T-cell (primary cell): ENCODE measurements at regions of chr17 and their contacts with region 1.

Region 1: DNA sequence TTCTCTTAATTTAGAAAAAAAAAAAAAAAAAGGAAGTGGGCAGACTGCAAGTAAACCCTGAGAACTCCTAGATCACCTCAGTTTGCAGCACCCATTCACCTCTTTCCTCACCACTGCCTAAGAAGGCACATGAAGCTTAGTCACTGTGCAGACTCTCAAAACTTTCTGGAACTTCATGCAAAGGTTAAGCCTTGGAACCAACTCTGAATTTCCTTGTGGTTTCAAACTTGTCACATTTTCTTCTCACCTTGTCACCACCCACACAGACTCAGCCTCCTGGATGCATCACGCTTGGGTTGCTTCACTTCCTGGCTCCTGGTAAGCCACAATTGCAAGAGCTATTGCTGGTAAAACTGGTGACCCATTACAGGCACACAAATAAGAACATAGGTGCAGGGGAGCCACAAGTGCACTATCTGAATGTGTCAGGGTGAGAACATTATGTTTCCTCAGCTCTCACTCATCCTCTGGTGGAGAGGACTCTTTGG is 15.0 kb upstream of the CPD start:
- DNase-seq: peak; percentile 32 to 87 (median 66)
- ATAC-seq: peak; percentile 90 to 91 (median 90)
- H3K4me3 ChIP-seq: no peak overlapping the region
- H3K4me3 Mint-ChIP-seq: peak overlapping the region; percentile 20 to 57 (median 44)
- H3K27ac ChIP-seq: peak overlapping the region; percentile 39
- H3K27ac Mint-ChIP-seq: peak overlapping the region; percentile 90 to 92
- H3K4me1 ChIP-seq: peaks cover 15 to 34% of the 10 kb centered on the region in 2 experiments
- H3K4me1 Mint-ChIP-seq: peaks cover 19 to 30% (median 29%) of the 10 kb centered on the region in 3 donors
- H3K27me3 ChIP-seq: no peaks in the 10 kb centered on the region
- H3K27me3 Mint-ChIP-seq: no peaks in the 10 kb centered on the region

Region 2: DNA sequence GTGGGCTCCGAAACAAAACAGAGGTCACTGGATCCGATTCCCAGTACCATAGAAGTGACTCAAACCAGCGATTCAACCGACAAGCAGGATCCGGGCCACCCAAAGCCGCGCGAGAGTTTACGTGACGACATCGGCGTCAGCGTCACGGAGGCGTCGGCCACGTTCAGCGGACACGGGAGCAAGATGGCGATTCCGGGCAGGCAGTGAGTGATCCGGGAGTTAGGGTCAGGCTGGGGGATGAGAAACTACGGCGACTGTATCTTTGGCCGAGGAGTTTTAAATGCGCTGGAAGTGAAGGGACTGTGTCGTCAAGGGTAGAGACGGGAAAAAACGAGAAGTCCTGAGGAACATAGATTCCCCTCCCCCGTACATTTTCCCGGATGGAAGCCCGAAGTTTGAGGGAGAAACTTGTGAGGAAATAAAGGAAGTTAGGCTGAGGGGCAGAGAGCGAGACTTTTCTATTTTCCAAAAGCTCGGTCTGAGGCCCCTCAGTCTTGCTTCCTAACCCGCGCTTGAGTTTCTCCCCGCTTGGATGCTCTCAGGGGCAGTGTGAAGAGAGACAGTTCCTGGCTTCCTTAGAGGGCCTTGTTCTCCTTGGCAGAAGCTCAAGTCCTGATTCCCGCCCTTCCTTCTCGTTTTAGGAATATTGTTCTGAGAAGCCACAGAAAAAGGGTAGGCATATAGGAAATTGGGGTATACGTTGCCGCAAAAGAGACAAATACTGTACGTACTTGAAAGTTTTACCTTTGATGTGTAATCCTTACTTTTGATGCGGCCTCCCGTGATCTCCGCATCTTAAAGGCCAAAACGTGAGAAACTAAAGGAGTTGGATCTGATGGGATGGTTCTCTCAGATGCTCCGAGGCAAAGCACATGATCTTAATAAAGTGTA is 246.9 kb before region 1 on chr17 and contains the start of gene NSRP1:
- CTCF ChIA-PET with region 1: no interaction called
- POLR2A ChIA-PET with region 1: interaction called in 1 of 2 experiments, 19 read pairs
- DNase-seq: peak; percentile 85 to 96 (median 90)
- ATAC-seq: peak; percentile 98 to 100 (median 99)
- H3K4me3 ChIP-seq: peak within 1 kb of the TSS; percentile 97 to 99
- H3K4me3 Mint-ChIP-seq: peak within 1 kb of the TSS; percentile 94 to 98 (median 95)
- H3K27ac ChIP-seq: peak within 1 kb of the TSS; percentile 99
- H3K27ac Mint-ChIP-seq: peak within 1 kb of the TSS; percentile 96 to 98
- H3K4me1 ChIP-seq: peaks cover 13 to 21% of the 10 kb centered on the region in 2 experiments
- H3K4me1 Mint-ChIP-seq: peaks cover 34 to 48% (median 47%) of the 10 kb centered on the region in 3 donors
- H3K27me3 ChIP-seq: no peaks in the 10 kb centered on the region
- H3K27me3 Mint-ChIP-seq: no peaks in the 10 kb centered on the region
- total RNA-seq, gene NSRP1: 24.6 to 31.9 (median 28.5) TPM